ENCODE measurements at regions of chr19 and their contacts with region 1.

Region 1: DNA sequence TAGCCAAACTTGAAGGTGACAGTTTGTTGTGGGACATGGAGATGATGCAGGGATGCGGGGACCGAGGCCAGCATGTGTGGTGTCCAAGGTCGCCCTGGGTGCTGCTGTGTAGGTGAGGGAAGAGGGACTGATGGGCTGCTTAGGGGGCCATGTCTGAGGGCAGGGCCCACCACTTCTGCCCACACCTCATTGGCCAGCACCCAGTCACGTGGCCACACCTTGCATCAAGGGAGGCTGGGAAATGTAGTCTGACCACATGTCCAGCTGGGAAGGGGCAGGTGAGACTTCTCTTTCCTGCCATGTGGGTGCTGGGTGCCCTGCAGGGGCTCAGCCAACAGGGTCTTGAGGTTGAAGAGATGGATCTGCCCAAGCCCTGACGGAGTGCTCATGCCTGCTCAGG is 88.9 kb downstream of the KDM4B start:
- DNase-seq: no peak
- ATAC-seq: no peak
- H3K4me3 ChIP-seq: no peak overlapping the region
- H3K27ac ChIP-seq: no peak overlapping the region
- H3K4me1 ChIP-seq: peaks cover 0 to 20% (median 8%) of the 10 kb centered on the region in 4 donors
- H3K27me3 ChIP-seq: no peaks in the 10 kb centered on the region
- CTCF ChIP-seq: no peak
- POLR2A ChIP-seq: no peak

Region 2: GRCh38 chr19:5112681-5113557 is 55.1 kb after region 1 on chr19:
- intact Hi-C with region 1: no loop called
- DNase-seq: no peak
- ATAC-seq: no peak
- H3K4me3 ChIP-seq: no peak overlapping the region
- H3K27ac ChIP-seq: no peak overlapping the region
- H3K4me1 ChIP-seq: peaks cover 0 to 21% (median 10%) of the 10 kb centered on the region in 4 donors
- H3K27me3 ChIP-seq: no peaks in the 10 kb centered on the region
- CTCF ChIP-seq: no peak
- POLR2A ChIP-seq: no peak

Region 3: GRCh38 chr19:5154129-5154798 is 96.4 kb after region 1 on chr19:
- intact Hi-C with region 1: loop called in 1 of 2 experiments (anchors 10 kb)
- DNase-seq: peak; percentile 49 to 60 (median 55)
- ATAC-seq: peak; percentile 55 to 71 (median 60)
- H3K4me3 ChIP-seq: no peak overlapping the region
- H3K27ac ChIP-seq: no peak overlapping the region
- H3K4me1 ChIP-seq: no peaks in the 10 kb centered on the region
- H3K27me3 ChIP-seq: no peaks in the 10 kb centered on the region
- CTCF ChIP-seq: peak; percentile 23 to 53 (median 36)
- POLR2A ChIP-seq: no peak